ENCODE measurements at regions of chr22 and their contacts with region 1.

Region 1: GRCh38 chr22:22235558-22235957 is 9.0 kb upstream of the VPREB1 start:
- DNase-seq: peak in 8 of 9 experiments; percentile 32 to 71 (median 52)
- ATAC-seq: no peak
- H3K4me3 ChIP-seq: no peak overlapping the region
- H3K4me3 Mint-ChIP-seq: no peak overlapping the region
- H3K27ac ChIP-seq: no peak overlapping the region
- H3K27ac Mint-ChIP-seq: no peak overlapping the region
- H3K4me1 ChIP-seq: no peaks in the 10 kb centered on the region
- H3K4me1 Mint-ChIP-seq: no peaks in the 10 kb centered on the region
- H3K27me3 ChIP-seq: no peaks in the 10 kb centered on the region
- H3K27me3 Mint-ChIP-seq: peaks cover 2% of the 10 kb centered on the region
- CTCF ChIP-seq: peak; percentile 41

Region 2: DNA sequence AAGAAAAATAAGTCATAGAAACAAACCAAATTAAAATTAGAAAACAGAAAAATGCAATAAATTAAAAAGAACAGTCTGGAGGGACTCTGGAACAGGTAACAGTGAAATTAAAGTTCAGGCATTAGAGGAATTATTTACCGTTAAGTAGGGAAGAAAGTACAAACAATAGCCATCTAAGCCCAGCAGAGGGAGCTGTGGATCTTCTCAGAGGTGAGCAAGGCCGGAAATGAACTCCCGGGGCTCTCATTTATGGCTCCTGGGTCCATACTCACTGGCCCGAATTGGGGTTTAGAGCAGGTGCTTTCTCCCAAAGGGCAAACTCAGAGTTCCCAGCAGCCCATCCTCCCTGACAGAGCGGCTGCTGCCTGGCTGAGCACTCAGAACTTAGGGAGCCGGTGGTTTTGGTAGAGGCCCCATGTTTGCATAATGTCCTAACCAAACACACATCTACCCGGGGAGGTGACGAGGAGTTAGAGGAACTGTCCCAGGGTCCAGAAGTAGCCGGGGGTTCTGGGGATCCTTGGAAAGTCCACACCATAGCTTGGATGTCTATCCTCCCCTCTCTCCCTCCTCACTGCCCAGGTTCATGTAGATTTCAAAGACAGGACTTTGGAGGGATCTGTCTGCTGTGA is 78.7 kb before region 1 on chr22:
- CTCF ChIA-PET with region 1: interaction called, 4 read pairs
- POLR2A ChIA-PET with region 1: no interaction called
- intact Hi-C with region 1: loop called in 1 of 2 experiments (anchors 1 kb)
- DNase-seq: peak; percentile 21 to 85 (median 62)
- ATAC-seq: peak; percentile 87
- H3K4me3 ChIP-seq: no peak overlapping the region
- H3K4me3 Mint-ChIP-seq: no peak overlapping the region
- H3K27ac ChIP-seq: no peak overlapping the region
- H3K27ac Mint-ChIP-seq: peak overlapping the region; percentile 15
- H3K4me1 ChIP-seq: no peaks in the 10 kb centered on the region
- H3K4me1 Mint-ChIP-seq: peaks cover 8% of the 10 kb centered on the region
- H3K27me3 ChIP-seq: no peaks in the 10 kb centered on the region
- H3K27me3 Mint-ChIP-seq: peaks cover 3% of the 10 kb centered on the region
- CTCF ChIP-seq: peak; percentile 76

Region 3: GRCh38 chr22:22214819-22215329 is 20.7 kb before region 1 on chr22:
- CTCF ChIA-PET with region 1: interaction called, 25 read pairs
- POLR2A ChIA-PET with region 1: no interaction called
- intact Hi-C with region 1: loop called in 1 of 2 experiments (anchors 1 kb)
- DNase-seq: no peak
- ATAC-seq: no peak
- H3K4me3 ChIP-seq: no peak overlapping the region
- H3K4me3 Mint-ChIP-seq: no peak overlapping the region
- H3K27ac ChIP-seq: no peak overlapping the region
- H3K27ac Mint-ChIP-seq: no peak overlapping the region
- H3K4me1 ChIP-seq: peaks cover 5% of the 10 kb centered on the region
- H3K4me1 Mint-ChIP-seq: peaks cover 7% of the 10 kb centered on the region
- H3K27me3 ChIP-seq: no peaks in the 10 kb centered on the region
- H3K27me3 Mint-ChIP-seq: no peaks in the 10 kb centered on the region
- CTCF ChIP-seq: no peak

Region 4: DNA sequence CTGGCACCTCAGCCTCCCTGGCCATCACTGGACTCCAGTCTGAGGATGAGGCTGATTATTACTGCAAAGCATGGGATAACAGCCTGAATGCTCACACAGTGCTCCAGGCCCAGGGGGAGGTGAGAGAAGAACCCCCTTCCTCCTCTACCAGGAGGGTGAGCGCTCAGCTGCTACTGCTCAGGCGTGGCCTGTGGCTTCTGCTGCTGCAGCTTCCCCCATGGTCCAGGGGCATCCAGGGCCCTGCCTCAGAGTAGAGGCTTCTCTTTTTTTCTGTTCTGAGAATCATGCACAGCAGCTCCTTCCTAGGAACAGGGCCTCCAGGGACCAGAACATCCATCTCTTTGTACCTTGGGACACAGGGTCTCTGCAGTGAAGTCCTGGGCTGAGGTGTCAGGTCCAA is 92.2 kb after region 1 on chr22:
- CTCF ChIA-PET with region 1: no interaction called
- POLR2A ChIA-PET with region 1: no interaction called
- intact Hi-C with region 1: no loop called
- DNase-seq: no peak
- ATAC-seq: no peak
- H3K4me3 ChIP-seq: no peak overlapping the region
- H3K4me3 Mint-ChIP-seq: no peak overlapping the region
- H3K27ac ChIP-seq: no peak overlapping the region
- H3K27ac Mint-ChIP-seq: no peak overlapping the region
- H3K4me1 ChIP-seq: no peaks in the 10 kb centered on the region
- H3K4me1 Mint-ChIP-seq: no peaks in the 10 kb centered on the region
- H3K27me3 ChIP-seq: no peaks in the 10 kb centered on the region
- H3K27me3 Mint-ChIP-seq: peaks cover 30% of the 10 kb centered on the region
- CTCF ChIP-seq: no peak